ENCODE measurements at regions of chr6 and their contacts with region 1.

Region 1: DNA sequence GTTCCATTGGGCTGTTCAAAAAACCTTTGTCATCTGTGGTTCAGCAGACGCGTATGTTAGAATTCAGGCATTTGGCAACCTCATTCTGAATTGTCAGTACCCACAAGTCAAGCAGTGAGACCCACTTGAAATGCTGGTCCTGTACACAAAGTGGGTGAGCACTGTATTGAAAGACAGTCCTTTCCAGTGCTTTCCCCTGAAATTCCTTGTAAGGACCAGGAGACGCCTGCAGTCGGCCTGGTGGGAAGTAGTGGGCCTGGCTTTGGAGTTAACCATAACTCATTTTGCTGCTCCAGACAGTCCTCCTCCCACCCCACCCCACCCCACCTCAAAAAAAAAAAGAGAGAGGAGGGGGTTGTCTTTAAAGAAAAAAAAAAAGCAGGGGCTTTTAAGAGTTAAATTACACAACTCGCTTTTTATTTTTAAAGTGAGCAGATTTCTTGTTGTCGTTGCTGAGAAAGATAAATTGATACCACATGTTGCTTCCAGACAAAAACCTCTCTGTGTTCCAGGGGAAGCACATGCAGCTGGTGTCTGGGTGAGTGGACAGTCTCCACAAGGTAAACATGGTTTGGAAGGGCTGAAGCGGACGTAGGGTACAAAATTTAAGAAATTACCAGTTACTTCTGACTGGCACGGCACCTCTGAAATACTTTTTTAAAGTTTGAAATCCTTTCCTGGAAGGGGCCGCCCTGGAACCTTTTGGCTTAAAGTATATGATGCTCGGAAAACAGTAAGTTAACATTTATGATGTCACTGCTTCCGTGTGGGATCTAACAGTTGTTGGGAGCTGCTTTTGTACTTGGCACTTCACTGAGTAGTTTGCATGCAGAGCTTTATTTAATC is 95.3 kb downstream of the FOXO3 start:
- DNase-seq: no peak
- H3K4me3 ChIP-seq: peak overlapping the region in 3 of 4 donors; percentile 7 to 47 (median 35)
- H3K27ac ChIP-seq: peak overlapping the region; percentile 15 to 89 (median 77)
- H3K4me1 ChIP-seq: peaks cover 34 to 99% (median 68%) of the 10 kb centered on the region in 3 donors
- H3K27me3 ChIP-seq: no peaks in the 10 kb centered on the region
- CTCF ChIP-seq: no peak
- POLR2A ChIP-seq: no peak

Region 2: GRCh38 chr6:108558372-108559096 is 97.5 kb before region 1 on chr6:
- intact Hi-C with region 1: loop called (anchors 10 kb)
- DNase-seq: peak; percentile 91
- H3K4me3 ChIP-seq: peak overlapping the region; percentile 69 to 98 (median 80)
- H3K27ac ChIP-seq: peak overlapping the region; percentile 95 to 100 (median 98)
- H3K4me1 ChIP-seq: peaks cover 15 to 50% (median 16%) of the 10 kb centered on the region in 3 donors
- H3K27me3 ChIP-seq: no peaks in the 10 kb centered on the region
- CTCF ChIP-seq: no peak
- POLR2A ChIP-seq: peak in 3 of 4 donors; percentile 28 to 86 (median 81)

Measured in esophagus squamous epithelium (tissue), 5 donors.